H1 (cell line): ENCODE measurements at regions of chr9 and their contacts with region 1.

Region 1: DNA sequence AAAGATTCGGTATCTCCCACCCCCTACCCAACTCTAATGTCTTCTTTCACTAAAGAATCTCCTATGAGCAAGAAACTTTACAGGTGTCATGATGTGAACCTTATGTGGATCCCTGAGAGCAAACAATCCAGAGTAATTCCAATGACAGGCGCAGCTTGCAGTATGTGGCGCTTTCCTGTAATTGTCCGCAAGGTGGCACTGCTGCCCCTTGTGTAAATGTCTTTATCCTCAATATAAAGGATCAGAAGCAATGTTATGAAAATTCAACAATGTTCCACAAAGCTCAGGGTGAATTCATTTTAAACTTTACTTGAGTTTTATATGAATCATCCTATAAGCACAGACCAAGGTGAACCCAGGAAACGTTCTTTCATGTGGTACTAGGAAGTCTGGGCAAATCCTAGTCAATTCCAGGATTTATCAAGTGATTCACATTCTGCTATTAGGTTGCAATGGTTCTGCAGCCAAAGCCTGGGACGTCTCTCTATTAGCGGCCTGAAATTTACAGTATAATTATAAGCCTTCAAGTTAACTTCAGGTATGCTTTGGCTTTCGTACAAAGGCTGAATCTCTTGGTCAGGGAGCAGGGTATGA is 113.7 kb downstream of the TRPM6 start:
- DNase-seq: peak; percentile 19 to 75
- H3K4me3 ChIP-seq: no peak overlapping the region
- H3K27ac ChIP-seq: no peak overlapping the region
- H3K4me1 ChIP-seq: 0 out of 7 replicates have a peak, but pooled peaks cover 0 to 2% (median 0%) of the 10 kb centered on the region in 4 experiments
- H3K27me3 ChIP-seq: no peaks in the 10 kb centered on the region
- CTCF ChIP-seq: peak; percentile 66 to 86 (median 80)
- EP300 ChIP-seq: no peak
- POLR2A ChIP-seq: no peak
- RAD21 ChIP-seq: peak; percentile 91 to 92

Region 2: DNA sequence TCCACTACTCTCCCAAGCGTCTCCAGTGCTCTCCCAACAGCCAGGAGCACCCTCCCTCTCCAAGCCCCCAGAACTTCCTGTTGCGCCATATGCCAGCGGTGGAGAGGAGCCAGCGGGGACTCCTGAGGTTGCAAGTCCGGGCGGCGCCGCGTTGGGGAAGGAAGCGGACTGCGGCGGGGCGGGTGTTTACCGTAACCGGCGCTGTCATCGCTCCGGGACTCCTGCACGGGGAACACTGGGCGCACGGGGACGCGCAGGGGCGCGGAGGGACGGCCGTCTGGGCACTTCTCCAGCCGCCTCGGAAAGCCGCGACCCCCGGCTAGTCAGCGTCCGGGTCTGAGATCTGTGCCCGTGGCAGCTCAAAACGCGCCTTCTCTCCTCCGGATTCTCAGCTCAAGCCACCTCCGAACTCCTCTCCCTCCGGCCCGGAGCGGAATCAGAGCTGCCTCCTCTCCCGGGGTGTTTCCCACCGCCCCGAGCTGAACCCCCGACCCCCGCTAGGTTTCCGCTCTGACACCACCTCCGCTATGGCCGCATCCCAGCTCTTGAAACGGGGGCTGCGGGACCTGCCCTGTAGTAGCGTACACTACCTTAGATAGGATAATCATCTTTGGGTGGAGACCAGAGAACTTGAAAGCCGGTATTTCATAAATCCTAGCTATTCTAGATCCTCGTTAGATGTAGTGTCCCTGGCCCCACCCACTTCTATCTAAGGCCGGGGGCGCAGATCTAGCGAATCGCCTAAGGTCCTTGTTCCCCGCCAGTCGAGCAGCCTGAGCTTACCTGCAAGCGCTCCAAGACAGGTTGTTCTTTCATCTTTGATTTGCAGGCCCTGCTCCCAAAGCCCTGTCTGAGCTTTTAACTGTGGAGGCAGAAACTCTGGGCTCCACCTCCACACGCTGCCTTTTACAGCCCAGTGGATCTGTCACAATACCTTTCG is 113.3 kb after region 1 on chr9 and contains the start of gene TRPM6:
- CTCF ChIA-PET with region 1: interaction called, 13 read pairs
- POLR2A ChIA-PET with region 1: no interaction called
- DNase-seq: peak in 1 of 2 experiments; percentile 73
- H3K4me3 ChIP-seq: peak within 1 kb of the TSS; percentile 61 to 78 (median 68)
- H3K27ac ChIP-seq: no peak within 1 kb of the TSS
- H3K4me1 ChIP-seq: no peaks in the 10 kb centered on the region; a peak in 1 of 7 replicates
- H3K27me3 ChIP-seq: peaks cover 0 to 2% (median 0%) of the 10 kb centered on the region in 4 experiments; a peak in 1 of 7 replicates
- CTCF ChIP-seq: no peak
- EP300 ChIP-seq: no peak
- POLR2A ChIP-seq: 0 out of 3 replicates have a peak, but pooled peaks of 1 of the 2 experiments have one; percentile 23
- RAD21 ChIP-seq: no peak
- total RNA-seq, gene TRPM6: 0.99 and 1.5 TPM in 2 replicates

Region 3: GRCh38 chr9:74952281-74953151 is 178.5 kb after region 1 on chr9 and contains the start of gene C9orf40:
- CTCF ChIA-PET with region 1: interaction called, 123 read pairs
- POLR2A ChIA-PET with region 1: no interaction called
- DNase-seq: peak; percentile 60 to 94
- H3K4me3 ChIP-seq: peak within 1 kb of the TSS; percentile 50 to 80 (median 71)
- H3K27ac ChIP-seq: peak within 1 kb of the TSS; percentile 82; the same call in 1 of the 2 replicates
- H3K4me1 ChIP-seq: peaks cover 0 to 5% (median 2%) of the 10 kb centered on the region in 4 experiments; a peak in 3 of 7 replicates
- H3K27me3 ChIP-seq: no peaks in the 10 kb centered on the region
- CTCF ChIP-seq: peak; percentile 69 to 90 (median 82)
- EP300 ChIP-seq: no peak
- POLR2A ChIP-seq: peak; percentile 65 to 66; a peak in 2 of 3 replicates
- RAD21 ChIP-seq: peak; percentile 45 to 60
- total RNA-seq, gene C9orf40: 10.8 and 11.2 TPM in 2 replicates

Region 4: DNA sequence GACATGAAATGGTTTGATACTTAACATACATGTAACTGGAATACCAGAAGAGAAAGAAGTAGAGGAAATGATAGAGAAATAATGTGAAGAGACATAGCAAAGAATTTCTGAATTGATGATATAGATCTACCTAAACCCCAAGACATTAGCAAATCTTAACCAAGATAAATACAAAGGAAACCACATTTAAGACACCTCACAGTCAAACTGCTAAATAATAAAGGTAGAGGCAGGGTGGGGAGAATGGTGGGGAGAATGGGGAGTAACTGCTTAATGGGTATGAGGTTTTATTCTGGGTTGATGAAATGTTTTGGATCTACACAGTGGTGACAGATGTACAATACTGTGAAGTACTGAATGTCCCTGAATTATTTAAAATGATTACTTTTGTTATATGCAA is 236.6 kb after region 1 on chr9:
- CTCF ChIA-PET with region 1: interaction called, 241 read pairs
- POLR2A ChIA-PET with region 1: no interaction called
- DNase-seq: no peak
- H3K4me3 ChIP-seq: no peak overlapping the region
- H3K27ac ChIP-seq: no peak overlapping the region
- H3K4me1 ChIP-seq: no peaks in the 10 kb centered on the region
- H3K27me3 ChIP-seq: no peaks in the 10 kb centered on the region
- CTCF ChIP-seq: no peak
- EP300 ChIP-seq: no peak
- POLR2A ChIP-seq: no peak
- RAD21 ChIP-seq: no peak

Region 5: DNA sequence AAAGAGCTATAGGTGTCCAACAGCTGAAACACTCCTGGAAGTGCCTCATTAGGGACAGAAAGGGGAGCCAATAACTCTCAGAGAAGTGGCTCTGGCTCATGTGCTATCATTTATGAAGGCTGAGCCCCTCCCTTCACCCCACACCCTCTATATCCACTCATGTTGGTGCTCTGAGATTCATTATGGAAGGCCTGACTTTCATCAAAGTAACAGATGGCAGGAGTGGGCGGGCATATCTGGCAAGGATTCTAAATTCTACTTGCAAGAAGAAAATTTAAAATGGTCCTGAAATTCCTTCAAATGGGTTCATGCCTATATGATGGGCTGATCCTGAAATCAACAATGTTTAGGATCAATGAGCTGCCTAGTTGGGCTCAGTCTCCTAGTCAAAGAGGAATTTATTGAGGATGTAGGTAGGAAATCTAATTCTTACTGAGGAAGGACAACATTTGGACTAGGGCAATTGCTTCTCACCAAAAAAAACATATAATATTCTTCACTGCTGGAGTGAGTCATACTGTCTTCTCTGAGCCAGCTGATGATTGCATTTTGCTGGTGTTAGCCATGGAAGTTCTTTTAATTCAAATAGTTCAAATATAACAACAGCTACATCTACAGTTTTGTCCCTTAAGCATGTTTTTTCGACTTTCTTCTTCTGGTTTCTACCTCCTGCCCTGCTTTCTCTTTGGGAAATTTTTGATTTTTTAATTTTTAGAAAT is 290.5 kb after region 1 on chr9:
- CTCF ChIA-PET with region 1: interaction called, 23 read pairs
- POLR2A ChIA-PET with region 1: no interaction called
- DNase-seq: no peak
- H3K4me3 ChIP-seq: no peak overlapping the region
- H3K27ac ChIP-seq: no peak overlapping the region
- H3K4me1 ChIP-seq: no peaks in the 10 kb centered on the region; a peak in 1 of 7 replicates
- H3K27me3 ChIP-seq: no peaks in the 10 kb centered on the region
- CTCF ChIP-seq: no peak
- EP300 ChIP-seq: no peak
- POLR2A ChIP-seq: no peak
- RAD21 ChIP-seq: no peak